ENCODE measurements at regions of chr6 and their contacts with region 1.

Region 1: GRCh38 chr6:16704401-16705045 is 56.7 kb downstream of the ATXN1 start:
- DNase-seq: no peak
- ATAC-seq: peak; percentile 45
- H3K4me3 Mint-ChIP-seq: peak overlapping the region; percentile 15
- H3K27ac Mint-ChIP-seq: no peak overlapping the region
- H3K4me1 Mint-ChIP-seq: peaks cover 57% of the 10 kb centered on the region
- H3K27me3 Mint-ChIP-seq: peaks cover 8% of the 10 kb centered on the region
- CTCF ChIP-seq: no peak

Region 2: GRCh38 chr6:16576451-16577368 is 127.8 kb before region 1 on chr6:
- CTCF ChIA-PET with region 1: no interaction called
- POLR2A ChIA-PET with region 1: interaction called, 10 read pairs
- intact Hi-C with region 1: no loop called
- DNase-seq: no peak
- ATAC-seq: peak; percentile 45
- H3K4me3 Mint-ChIP-seq: no peak overlapping the region
- H3K27ac Mint-ChIP-seq: no peak overlapping the region
- H3K4me1 Mint-ChIP-seq: peaks cover 6% of the 10 kb centered on the region
- H3K27me3 Mint-ChIP-seq: no peaks in the 10 kb centered on the region
- CTCF ChIP-seq: no peak

Measured in activated B cell treated with CpG ODN at 0.5 μM for 24 hours (primary cell).